Activated CD8-positive, alpha-beta T cell treated with anti-CD3 and anti-CD28 coated beads for 36 hours (primary cell): ENCODE measurements at regions of chr11 and their contacts with region 1.

Region 1: DNA sequence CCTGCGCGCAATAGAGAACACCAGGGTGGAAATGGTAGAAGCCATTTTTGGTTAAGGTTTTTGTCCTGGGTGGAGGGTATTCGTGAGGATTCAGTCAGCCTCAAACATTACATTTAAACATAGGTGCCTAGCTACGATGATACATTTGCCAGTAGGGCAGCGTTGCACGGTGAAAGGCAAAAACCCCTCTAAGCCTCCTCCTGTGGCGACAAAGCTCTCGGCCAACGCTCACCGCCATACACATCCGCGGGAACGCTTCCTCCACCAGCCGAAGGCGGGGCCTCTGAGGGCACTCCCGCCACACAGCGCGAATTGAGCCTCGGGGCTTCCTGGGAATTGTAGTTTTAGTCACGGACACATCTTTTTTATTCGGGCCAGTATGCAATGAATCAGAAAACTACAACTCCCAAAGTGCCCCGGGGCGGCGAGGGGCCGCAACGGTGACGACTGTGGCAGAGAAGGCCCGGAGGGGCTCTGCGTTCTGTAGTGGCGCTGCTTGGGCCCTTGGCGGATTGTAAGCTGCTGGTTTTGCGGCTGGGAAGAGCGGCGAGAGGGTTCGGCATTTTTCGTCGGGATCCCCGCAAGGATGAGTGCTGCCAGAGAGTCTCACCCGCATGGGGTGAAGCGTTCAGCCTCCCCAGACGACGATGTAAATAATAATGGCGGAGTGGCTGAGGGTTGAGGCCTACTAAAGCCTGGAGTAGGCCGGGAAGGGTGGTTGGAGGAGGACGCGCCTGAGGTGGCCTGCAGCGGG is at the start of gene C11orf58:
- DNase-seq: peak; percentile 98
- ATAC-seq: peak; percentile 97
- H3K4me3 Mint-ChIP-seq: no peak within 1 kb of the TSS
- H3K27ac Mint-ChIP-seq: peak within 1 kb of the TSS; percentile 89
- H3K4me1 Mint-ChIP-seq: peaks cover 28% of the 10 kb centered on the region
- H3K27me3 Mint-ChIP-seq: no peaks in the 10 kb centered on the region
- CTCF ChIP-seq: no peak
- total RNA-seq, gene C11orf58: 114 to 133 TPM

Region 2: GRCh38 chr11:16713594-16713993 is 24.8 kb before region 1 on chr11:
- CTCF ChIA-PET with region 1: no interaction called
- POLR2A ChIA-PET with region 1: no interaction called
- intact Hi-C with region 1: no loop called
- DNase-seq: no peak
- ATAC-seq: no peak
- H3K4me3 Mint-ChIP-seq: no peak overlapping the region
- H3K27ac Mint-ChIP-seq: no peak overlapping the region
- H3K4me1 Mint-ChIP-seq: no peaks in the 10 kb centered on the region
- H3K27me3 Mint-ChIP-seq: peaks cover 7% of the 10 kb centered on the region
- CTCF ChIP-seq: no peak

Region 3: DNA sequence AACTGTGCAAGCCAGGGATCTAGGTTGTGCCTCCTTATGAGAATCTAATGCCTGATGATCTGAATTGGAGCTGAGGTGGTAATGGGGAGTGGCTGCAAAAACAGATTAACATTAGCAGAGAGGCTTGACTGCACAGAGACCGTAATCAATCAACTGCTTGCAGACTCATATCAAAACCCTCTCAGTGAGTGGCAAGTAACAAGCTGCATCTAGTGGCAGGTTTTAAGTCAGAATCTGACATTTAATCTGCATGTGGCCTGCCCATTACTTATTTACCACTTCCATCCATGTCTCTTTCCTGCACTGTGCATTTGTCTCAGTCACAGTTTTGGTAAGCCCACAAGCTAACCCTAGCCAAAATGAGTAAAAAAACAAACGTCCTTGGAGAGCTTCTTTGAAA is 11.3 kb after region 1 on chr11:
- CTCF ChIA-PET with region 1: interaction called, 5 read pairs
- POLR2A ChIA-PET with region 1: interaction called, 22 read pairs
- intact Hi-C with region 1: no loop called
- DNase-seq: peak; percentile 33
- ATAC-seq: peak; percentile 82
- H3K4me3 Mint-ChIP-seq: no peak overlapping the region
- H3K27ac Mint-ChIP-seq: peak overlapping the region; percentile 71
- H3K4me1 Mint-ChIP-seq: peaks cover 46% of the 10 kb centered on the region
- H3K27me3 Mint-ChIP-seq: no peaks in the 10 kb centered on the region
- CTCF ChIP-seq: no peak